MCF 10A (cell line): ENCODE measurements at regions of chr2 and their contacts with region 1.

Region 1: GRCh38 chr2:26018176-26018716 is 15.6 kb upstream of the RAB10 start:
- DNase-seq: peak; percentile 93
- H3K4me3 Mint-ChIP-seq: no peak overlapping the region
- H3K27ac Mint-ChIP-seq: peak overlapping the region; percentile 56
- H3K4me1 Mint-ChIP-seq: peaks cover 22% of the 10 kb centered on the region
- H3K27me3 Mint-ChIP-seq: no peaks in the 10 kb centered on the region
- CTCF ChIP-seq: no peak

Region 2: GRCh38 chr2:25964891-25965290 is 53.4 kb before region 1 on chr2:
- CTCF ChIA-PET with region 1: no interaction called
- POLR2A ChIA-PET with region 1: no interaction called
- intact Hi-C with region 1: no loop called
- DNase-seq: no peak
- H3K4me3 Mint-ChIP-seq: no peak overlapping the region
- H3K27ac Mint-ChIP-seq: no peak overlapping the region
- H3K4me1 Mint-ChIP-seq: peaks cover 7% of the 10 kb centered on the region
- H3K27me3 Mint-ChIP-seq: no peaks in the 10 kb centered on the region
- CTCF ChIP-seq: no peak

Region 3: GRCh38 chr2:26001743-26002351 is 16.4 kb before region 1 on chr2:
- CTCF ChIA-PET with region 1: interaction called, 5 read pairs
- POLR2A ChIA-PET with region 1: interaction called, 61 read pairs
- intact Hi-C with region 1: no loop called
- DNase-seq: peak; percentile 87
- H3K4me3 Mint-ChIP-seq: no peak overlapping the region
- H3K27ac Mint-ChIP-seq: no peak overlapping the region
- H3K4me1 Mint-ChIP-seq: peaks cover 36% of the 10 kb centered on the region
- H3K27me3 Mint-ChIP-seq: no peaks in the 10 kb centered on the region
- CTCF ChIP-seq: no peak